ENCODE measurements at regions of chr18 and their contacts with region 1.

Region 1: GRCh38 chr18:34661464-34662111 is 48.5 kb upstream of the DTNA start:
- H3K4me3 ChIP-seq: no peak overlapping the region
- H3K27ac ChIP-seq: no peak overlapping the region
- H3K4me1 ChIP-seq: peaks cover 5% of the 10 kb centered on the region
- CTCF ChIP-seq: peak; percentile 50

Region 2: DNA sequence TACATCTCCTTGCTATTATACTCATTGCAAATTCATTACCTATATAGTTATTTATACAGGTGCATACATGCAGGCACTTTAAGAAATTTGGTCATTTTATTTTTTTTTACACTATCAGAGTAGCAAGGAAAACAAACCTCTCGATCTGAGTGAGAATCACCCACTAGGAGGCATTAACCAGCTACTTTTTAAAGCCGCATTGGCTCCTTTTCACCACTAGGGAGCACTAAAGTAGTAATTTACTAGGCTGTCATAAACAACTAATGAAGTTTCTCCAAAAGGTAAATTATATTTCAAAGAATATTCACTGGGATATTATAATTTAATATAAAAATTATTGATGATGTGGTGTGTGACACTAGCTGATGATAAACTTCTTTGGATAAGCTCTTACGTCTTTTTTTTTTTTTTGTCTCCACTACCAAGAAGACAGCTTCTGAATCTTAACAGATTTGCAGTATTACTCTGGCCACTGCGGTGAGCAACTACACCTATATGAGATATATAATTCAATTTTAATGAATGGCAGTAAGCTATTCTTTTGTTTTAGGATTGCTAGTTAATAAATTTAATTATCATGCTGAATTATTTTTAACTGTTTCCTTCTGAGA is 538.8 kb before region 1 on chr18:
- CTCF ChIA-PET with region 1: interaction called, 14 read pairs
- POLR2A ChIA-PET with region 1: no interaction called
- H3K4me3 ChIP-seq: no peak overlapping the region
- H3K27ac ChIP-seq: no peak overlapping the region
- H3K4me1 ChIP-seq: peaks cover 11% of the 10 kb centered on the region
- CTCF ChIP-seq: peak; percentile 64; the same call in 1 of the 2 replicates

Region 3: DNA sequence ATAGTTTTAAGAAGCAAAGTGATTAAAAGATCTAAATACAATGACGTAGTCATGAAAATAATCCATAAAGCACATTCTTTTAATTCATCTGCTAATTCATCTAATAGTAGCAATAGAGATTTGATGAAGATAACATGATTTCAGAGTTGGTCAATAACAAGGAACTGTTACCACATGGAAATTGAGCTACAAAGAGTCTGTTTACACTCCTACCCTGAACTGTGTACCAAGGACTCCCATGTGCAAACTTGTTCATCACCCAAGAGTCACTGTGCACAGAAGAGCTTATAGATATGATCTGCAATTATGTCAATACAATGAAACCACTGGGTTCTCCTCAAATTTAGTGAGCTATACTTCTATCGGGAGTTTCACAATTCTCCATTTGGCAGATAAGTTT is 30.0 kb before region 1 on chr18:
- CTCF ChIA-PET with region 1: interaction called, 10 read pairs
- POLR2A ChIA-PET with region 1: no interaction called
- H3K4me3 ChIP-seq: no peak overlapping the region
- H3K27ac ChIP-seq: no peak overlapping the region
- H3K4me1 ChIP-seq: peaks cover 6% of the 10 kb centered on the region
- CTCF ChIP-seq: no peak

Region 4: GRCh38 chr18:34676816-34677574 is 15.4 kb after region 1 on chr18:
- CTCF ChIA-PET with region 1: interaction called, 33 read pairs
- POLR2A ChIA-PET with region 1: no interaction called
- H3K4me3 ChIP-seq: no peak overlapping the region
- H3K27ac ChIP-seq: no peak overlapping the region
- H3K4me1 ChIP-seq: no peaks in the 10 kb centered on the region
- CTCF ChIP-seq: no peak

Region 5: DNA sequence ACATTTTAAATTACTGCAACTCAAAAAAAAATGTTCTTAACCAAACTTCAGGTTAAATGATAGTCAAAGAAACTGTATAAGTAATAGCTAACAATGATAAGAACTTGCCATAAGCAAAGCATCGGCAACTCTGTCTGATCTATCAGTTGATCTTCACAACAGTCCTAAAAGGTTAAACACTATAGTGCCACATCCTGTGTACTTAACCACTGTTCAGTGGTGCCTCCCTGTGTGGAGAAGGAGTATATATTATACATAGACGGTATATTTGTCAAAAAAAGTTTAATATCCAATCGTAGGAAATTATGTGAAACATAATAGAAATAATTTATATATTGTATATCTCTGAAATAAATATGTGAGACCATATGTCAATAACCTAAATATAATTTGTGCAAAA is 61.6 kb after region 1 on chr18:
- CTCF ChIA-PET with region 1: interaction called, 25 read pairs
- POLR2A ChIA-PET with region 1: no interaction called
- H3K4me3 ChIP-seq: no peak overlapping the region
- H3K27ac ChIP-seq: no peak overlapping the region
- H3K4me1 ChIP-seq: no peaks in the 10 kb centered on the region
- CTCF ChIP-seq: no peak

Region 6: DNA sequence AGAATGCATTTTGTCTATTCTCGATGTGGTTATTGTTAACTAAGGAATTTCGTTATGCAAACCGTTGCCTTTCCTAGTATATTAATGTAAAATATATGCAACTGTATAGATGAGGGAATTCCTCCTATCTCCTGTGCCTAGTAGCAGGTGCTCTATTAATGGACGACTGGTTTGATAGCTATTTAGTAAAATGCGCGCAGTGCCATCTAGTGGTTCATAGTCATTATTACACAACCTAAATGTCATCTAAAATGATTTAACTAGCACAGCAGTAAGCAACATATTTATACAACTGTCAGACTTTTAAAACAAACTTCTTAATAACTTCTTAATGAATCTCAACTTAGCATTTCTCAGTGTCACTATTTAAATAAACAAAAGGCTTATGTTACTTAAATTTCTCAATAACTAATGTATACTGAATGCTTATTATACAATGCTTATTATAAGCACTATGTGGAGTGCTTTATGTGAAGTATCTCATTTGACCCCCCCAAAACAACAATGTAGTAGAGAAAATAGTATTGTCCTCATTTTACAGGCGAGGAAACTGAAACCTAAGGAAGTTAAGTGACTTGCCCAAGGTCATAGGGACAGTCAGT is 126.4 kb after region 1 on chr18:
- CTCF ChIA-PET with region 1: interaction called, 107 read pairs
- POLR2A ChIA-PET with region 1: no interaction called
- H3K4me3 ChIP-seq: no peak overlapping the region
- H3K27ac ChIP-seq: no peak overlapping the region
- H3K4me1 ChIP-seq: no peaks in the 10 kb centered on the region
- CTCF ChIP-seq: peak; percentile 57

Region 7: GRCh38 chr18:34921226-34921625 is 259.6 kb after region 1 on chr18:
- CTCF ChIA-PET with region 1: no interaction called
- POLR2A ChIA-PET with region 1: no interaction called
- H3K4me3 ChIP-seq: no peak overlapping the region
- H3K27ac ChIP-seq: no peak overlapping the region
- H3K4me1 ChIP-seq: no peaks in the 10 kb centered on the region
- CTCF ChIP-seq: no peak